ENCODE measurements at regions of chr2 and their contacts with region 1.

Region 1: GRCh38 chr2:229800997-229801754 is 86.8 kb upstream of the DNER start:
- DNase-seq: peak in 3 of 4 donors; percentile 36 to 65 (median 37)
- ATAC-seq: peak; percentile 83
- H3K4me3 ChIP-seq: no peak overlapping the region
- H3K27ac ChIP-seq: no peak overlapping the region
- H3K4me1 ChIP-seq: no peaks in the 10 kb centered on the region
- H3K27me3 ChIP-seq: no peaks in the 10 kb centered on the region
- CTCF ChIP-seq: peak; percentile 46 to 61

Region 2: DNA sequence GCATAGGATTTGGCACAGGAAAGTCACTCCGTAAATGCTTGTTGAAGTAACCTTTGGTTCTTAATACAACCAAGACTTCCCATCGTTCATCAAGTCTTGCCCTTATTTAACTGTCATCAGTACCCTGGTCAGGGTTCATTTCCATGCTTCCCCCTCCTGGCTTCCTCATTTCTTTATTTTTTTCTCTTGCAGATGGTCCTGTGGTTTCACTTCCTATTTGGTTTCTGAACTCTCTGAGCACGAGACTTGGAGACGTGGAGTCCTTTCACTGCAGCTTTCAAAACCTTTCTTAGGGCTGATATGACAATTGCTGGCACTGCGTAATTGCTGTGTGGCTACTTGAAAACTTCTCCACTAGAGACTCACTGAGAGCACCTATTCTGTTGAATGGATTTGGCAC is 470.2 kb before region 1 on chr2:
- intact Hi-C with region 1: no loop called
- DNase-seq: peak in 2 of 4 donors; percentile 13 to 39
- ATAC-seq: peak; percentile 69
- H3K4me3 ChIP-seq: no peak overlapping the region
- H3K27ac ChIP-seq: no peak overlapping the region
- H3K4me1 ChIP-seq: no peaks in the 10 kb centered on the region
- H3K27me3 ChIP-seq: no peaks in the 10 kb centered on the region
- CTCF ChIP-seq: no peak

Region 3: DNA sequence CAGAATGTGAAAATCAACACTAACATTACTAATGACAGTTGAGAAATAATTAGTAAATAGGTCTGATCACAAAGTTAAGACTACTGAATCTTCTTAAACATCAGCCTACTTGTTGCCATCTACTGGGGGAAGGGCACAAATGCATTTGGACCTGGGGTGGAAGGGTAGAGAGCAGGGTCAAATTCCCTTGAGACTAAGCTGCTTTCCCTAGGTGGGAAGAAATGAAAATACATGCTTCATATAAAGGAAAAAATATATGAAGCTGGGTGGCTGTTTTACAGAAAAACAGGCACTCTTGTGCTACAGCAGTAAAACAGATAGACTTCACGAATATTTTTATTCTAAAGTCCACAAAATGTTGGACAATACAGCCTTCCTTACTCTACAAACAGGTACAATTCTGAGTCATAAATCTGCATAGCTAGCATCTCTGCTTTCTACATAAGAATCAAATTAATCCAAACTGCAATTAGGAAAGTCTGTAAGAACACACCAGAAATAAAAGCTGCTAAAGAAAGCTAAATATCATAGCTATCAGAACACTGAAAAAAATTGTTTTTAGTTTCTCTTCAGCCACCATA is 109.7 kb after region 1 on chr2:
- intact Hi-C with region 1: loop called in 1 of 2 experiments (anchors 10 kb)
- DNase-seq: no peak
- ATAC-seq: peak; percentile 59
- H3K4me3 ChIP-seq: no peak overlapping the region
- H3K27ac ChIP-seq: no peak overlapping the region
- H3K4me1 ChIP-seq: peaks cover 7 to 68% of the 10 kb centered on the region in 2 donors
- H3K27me3 ChIP-seq: no peaks in the 10 kb centered on the region
- CTCF ChIP-seq: no peak

Region 4: GRCh38 chr2:230202430-230203109 is 401.4 kb after region 1 on chr2:
- intact Hi-C with region 1: no loop called
- DNase-seq: no peak
- ATAC-seq: no peak
- H3K4me3 ChIP-seq: no peak overlapping the region
- H3K27ac ChIP-seq: no peak overlapping the region
- H3K4me1 ChIP-seq: peaks cover 0 to 21% of the 10 kb centered on the region in 2 donors
- H3K27me3 ChIP-seq: no peaks in the 10 kb centered on the region
- CTCF ChIP-seq: no peak

Measured in left lung (tissue), 14 donors.